Endothelial cell of umbilical vein (primary cell): ENCODE measurements at regions of chr5 and their contacts with region 1.

Region 1: DNA sequence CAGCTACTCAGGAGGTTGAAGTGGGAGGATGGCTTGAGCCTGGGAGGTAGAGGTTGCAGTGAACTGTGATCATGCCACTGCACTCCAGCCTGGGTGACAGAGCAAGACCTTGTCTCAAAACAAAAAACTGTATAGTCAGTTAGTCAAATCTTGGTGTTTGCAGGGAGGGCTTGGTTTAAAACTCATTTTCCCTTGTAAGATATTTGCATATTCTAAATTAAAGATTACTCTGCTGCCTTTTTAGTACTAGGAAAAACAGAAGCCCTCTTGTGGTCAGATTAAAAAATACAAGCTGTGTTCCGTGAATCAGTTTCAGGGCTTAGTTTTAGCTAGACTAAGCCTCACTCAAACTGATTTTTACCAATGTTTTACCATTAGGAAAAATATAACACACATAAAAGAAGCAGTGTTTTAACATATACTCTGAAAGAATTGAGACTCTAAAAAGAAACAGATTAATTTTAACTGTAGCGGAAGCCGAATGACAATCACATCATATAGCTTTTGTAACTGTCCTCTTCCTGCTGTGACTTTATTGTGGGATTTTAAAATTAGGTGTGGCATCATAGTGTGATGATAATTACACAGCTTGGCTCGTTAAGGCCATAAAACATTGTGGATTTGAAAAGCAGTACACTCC is 84.9 kb upstream of the BASP1 start:
- DNase-seq: peak; percentile 67
- H3K4me3 ChIP-seq: no peak overlapping the region
- H3K27ac ChIP-seq: no peak overlapping the region
- H3K4me1 ChIP-seq: peaks cover 23% of the 10 kb centered on the region
- H3K27me3 ChIP-seq: no peaks in the 10 kb centered on the region
- CTCF ChIP-seq: peak; percentile 26 to 27
- POLR2A ChIP-seq: no peak

Region 2: DNA sequence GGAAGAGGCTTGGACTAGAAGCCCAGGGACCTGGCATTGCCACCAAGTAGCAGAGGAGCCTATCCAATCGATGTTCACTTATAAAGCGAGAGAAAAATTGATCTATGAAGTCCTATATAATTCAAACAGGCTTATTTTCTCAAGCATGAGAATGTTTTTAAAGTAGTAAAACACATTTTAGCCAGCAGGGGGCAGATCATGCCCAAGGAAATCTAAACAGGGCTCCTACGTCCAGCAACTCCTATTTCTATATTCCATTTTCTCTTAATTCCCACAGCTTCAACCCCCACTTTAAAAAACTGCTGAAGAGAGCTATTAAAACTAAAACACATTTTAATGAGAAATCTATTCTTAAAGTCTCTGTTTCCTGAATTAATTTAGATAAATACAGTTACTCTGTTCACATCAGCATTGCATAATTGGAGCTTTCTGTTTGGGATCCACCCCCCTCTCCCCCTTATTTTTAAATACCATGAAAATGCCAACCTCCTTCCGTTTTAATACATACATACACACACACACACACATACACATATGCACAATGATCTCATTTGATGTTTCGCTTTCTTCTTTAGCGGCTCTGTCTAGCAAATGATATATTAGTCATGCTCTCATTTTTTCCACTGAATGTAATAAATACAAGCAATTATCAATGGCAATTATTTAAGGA is 341.4 kb before region 1 on chr5:
- CTCF ChIA-PET with region 1: interaction called, 42 read pairs
- POLR2A ChIA-PET with region 1: no interaction called
- dilution Hi-C with region 1: no loop called
- intact Hi-C with region 1: loop called (anchors 2 kb)
- DNase-seq: peak; percentile 79
- H3K4me3 ChIP-seq: no peak overlapping the region
- H3K27ac ChIP-seq: no peak overlapping the region
- H3K4me1 ChIP-seq: no peaks in the 10 kb centered on the region
- H3K27me3 ChIP-seq: no peaks in the 10 kb centered on the region
- CTCF ChIP-seq: peak; percentile 35 to 55
- POLR2A ChIP-seq: no peak

Region 3: DNA sequence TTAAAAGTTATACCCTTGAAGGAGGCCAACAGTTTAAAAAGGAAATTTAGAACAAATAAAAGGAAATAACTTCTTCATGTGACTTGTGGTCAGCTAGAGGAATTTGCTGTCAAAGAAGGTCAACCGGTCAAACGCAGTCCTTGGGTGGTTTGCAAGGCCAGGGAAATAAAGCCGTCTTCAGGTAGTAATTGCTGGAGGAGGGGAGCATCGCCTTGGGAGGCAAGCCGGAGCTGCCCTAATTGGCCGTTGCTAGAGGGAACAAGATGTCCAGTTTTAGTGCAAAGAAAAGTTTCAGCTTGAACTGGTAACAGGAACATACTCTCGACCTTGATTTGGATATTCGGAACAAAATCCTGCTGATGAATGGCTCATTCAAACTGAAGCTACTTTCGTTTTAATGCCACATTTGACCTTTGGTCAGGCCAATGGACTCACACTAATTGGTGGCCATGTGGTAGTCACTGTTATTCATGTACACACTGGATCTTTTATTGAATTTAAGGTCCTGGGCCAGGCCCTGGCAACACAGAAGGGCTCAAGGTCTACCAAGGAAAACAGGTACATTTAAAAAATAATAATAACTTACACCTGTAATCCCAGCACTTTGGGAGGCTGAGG is 149.4 kb before region 1 on chr5:
- CTCF ChIA-PET with region 1: interaction called, 10 read pairs
- POLR2A ChIA-PET with region 1: no interaction called
- dilution Hi-C with region 1: no loop called
- intact Hi-C with region 1: no loop called
- DNase-seq: peak; percentile 75
- H3K4me3 ChIP-seq: no peak overlapping the region
- H3K27ac ChIP-seq: no peak overlapping the region
- H3K4me1 ChIP-seq: peaks cover 15% of the 10 kb centered on the region
- H3K27me3 ChIP-seq: no peaks in the 10 kb centered on the region
- CTCF ChIP-seq: no peak
- POLR2A ChIP-seq: no peak

Region 4: GRCh38 chr5:17037751-17038150 is 94.8 kb before region 1 on chr5:
- CTCF ChIA-PET with region 1: interaction called, 13 read pairs
- POLR2A ChIA-PET with region 1: no interaction called
- dilution Hi-C with region 1: no loop called
- intact Hi-C with region 1: no loop called
- DNase-seq: peak; percentile 85
- H3K4me3 ChIP-seq: no peak overlapping the region
- H3K27ac ChIP-seq: peak overlapping the region; percentile 81
- H3K4me1 ChIP-seq: peaks cover 19% of the 10 kb centered on the region
- H3K27me3 ChIP-seq: no peaks in the 10 kb centered on the region
- CTCF ChIP-seq: no peak
- POLR2A ChIP-seq: no peak

Region 5: GRCh38 chr5:17081142-17081541 is 51.4 kb before region 1 on chr5:
- CTCF ChIA-PET with region 1: interaction called, 44 read pairs
- POLR2A ChIA-PET with region 1: no interaction called
- dilution Hi-C with region 1: no loop called
- intact Hi-C with region 1: loop called (anchors 1 kb)
- DNase-seq: no peak
- H3K4me3 ChIP-seq: no peak overlapping the region
- H3K27ac ChIP-seq: peak overlapping the region; percentile 80
- H3K4me1 ChIP-seq: peaks cover 39% of the 10 kb centered on the region
- H3K27me3 ChIP-seq: no peaks in the 10 kb centered on the region
- CTCF ChIP-seq: no peak
- POLR2A ChIP-seq: no peak

Region 6: GRCh38 chr5:17118631-17119030 is 13.9 kb before region 1 on chr5:
- CTCF ChIA-PET with region 1: interaction called, 37 read pairs
- POLR2A ChIA-PET with region 1: interaction called, 5 read pairs
- dilution Hi-C with region 1: no loop called
- intact Hi-C with region 1: loop called (anchors 1 kb)
- DNase-seq: peak; percentile 99
- H3K4me3 ChIP-seq: no peak overlapping the region
- H3K27ac ChIP-seq: peak overlapping the region; percentile 85
- H3K4me1 ChIP-seq: peaks cover 32% of the 10 kb centered on the region
- H3K27me3 ChIP-seq: no peaks in the 10 kb centered on the region
- CTCF ChIP-seq: no peak
- POLR2A ChIP-seq: peak; percentile 64

Region 7: GRCh38 chr5:17169507-17169906 is 36.9 kb after region 1 on chr5:
- CTCF ChIA-PET with region 1: interaction called, 25 read pairs
- POLR2A ChIA-PET with region 1: no interaction called
- dilution Hi-C with region 1: no loop called
- intact Hi-C with region 1: loop called (anchors 1 kb)
- DNase-seq: peak; percentile 91
- H3K4me3 ChIP-seq: peak overlapping the region in 1 of 3 experiments; percentile 15
- H3K27ac ChIP-seq: peak overlapping the region; percentile 85
- H3K4me1 ChIP-seq: peaks cover 34% of the 10 kb centered on the region
- H3K27me3 ChIP-seq: no peaks in the 10 kb centered on the region
- CTCF ChIP-seq: no peak
- POLR2A ChIP-seq: peak; percentile 50